GM12878 (cell line): ENCODE measurements at regions of chr13 and their contacts with region 1.

Region 1: GRCh38 chr13:20418953-20419352 is 106.7 kb downstream of the CRYL1 start:
- DNase-seq: no peak
- ATAC-seq: no peak
- H3K4me3 ChIP-seq: no peak overlapping the region
- H3K27ac ChIP-seq: no peak overlapping the region
- H3K4me1 ChIP-seq: peaks cover 14% of the 10 kb centered on the region
- H3K27me3 ChIP-seq: no peaks in the 10 kb centered on the region
- CTCF ChIP-seq: no peak
- EP300 ChIP-seq: no peak
- POLR2A ChIP-seq: no peak
- RAD21 ChIP-seq: no peak

Region 2: DNA sequence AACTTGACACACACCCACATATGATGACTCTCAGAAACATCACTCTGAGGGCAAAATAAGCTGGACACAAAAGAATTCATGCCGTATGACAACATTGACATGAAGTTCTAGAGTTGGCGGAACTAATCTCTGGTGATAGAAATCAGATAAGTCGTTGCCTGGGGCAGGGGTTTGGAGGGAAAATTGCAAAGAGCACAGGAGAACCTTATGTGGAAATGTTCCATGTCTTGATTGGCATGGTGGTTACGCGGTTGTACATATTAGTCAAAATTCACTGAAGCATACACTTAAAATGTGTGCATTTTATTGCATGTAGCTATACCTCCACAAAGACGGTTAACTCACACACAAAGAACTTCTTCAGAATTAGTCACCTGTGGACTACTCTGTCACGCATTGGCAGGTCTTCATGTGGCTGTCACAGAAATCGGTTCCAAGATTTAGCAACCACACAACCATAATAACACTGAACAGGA is 49.0 kb before region 1 on chr13:
- CTCF ChIA-PET with region 1: no interaction called
- POLR2A ChIA-PET with region 1: no interaction called
- RAD21 ChIA-PET with region 1: no interaction called
- SMC1A ChIA-PET with region 1: interaction called, 3 read pairs
- in situ Hi-C with region 1: no loop called
- intact Hi-C with region 1: loop called (anchors 1 kb)
- DNase-seq: peak; percentile 59
- ATAC-seq: peak; percentile 96
- H3K4me3 ChIP-seq: no peak overlapping the region
- H3K27ac ChIP-seq: no peak overlapping the region; the same call in 1 of the 2 replicates
- H3K4me1 ChIP-seq: peaks cover 9% of the 10 kb centered on the region
- H3K27me3 ChIP-seq: no peaks in the 10 kb centered on the region
- CTCF ChIP-seq: no peak
- EP300 ChIP-seq: peak; percentile 45 to 47; a peak in 2 of 4 replicates
- POLR2A ChIP-seq: no peak
- RAD21 ChIP-seq: no peak

Region 3: GRCh38 chr13:20401931-20402856 is 16.8 kb before region 1 on chr13:
- CTCF ChIA-PET with region 1: no interaction called
- POLR2A ChIA-PET with region 1: no interaction called
- RAD21 ChIA-PET with region 1: no interaction called
- SMC1A ChIA-PET with region 1: no interaction called
- in situ Hi-C with region 1: no loop called
- intact Hi-C with region 1: no loop called
- DNase-seq: no peak
- ATAC-seq: no peak
- H3K4me3 ChIP-seq: no peak overlapping the region
- H3K27ac ChIP-seq: no peak overlapping the region
- H3K4me1 ChIP-seq: no peaks in the 10 kb centered on the region
- H3K27me3 ChIP-seq: no peaks in the 10 kb centered on the region
- CTCF ChIP-seq: no peak
- EP300 ChIP-seq: no peak
- POLR2A ChIP-seq: no peak
- RAD21 ChIP-seq: no peak

Region 4: GRCh38 chr13:20461481-20461859 is 42.5 kb after region 1 on chr13:
- CTCF ChIA-PET with region 1: no interaction called
- POLR2A ChIA-PET with region 1: no interaction called
- RAD21 ChIA-PET with region 1: no interaction called
- SMC1A ChIA-PET with region 1: no interaction called
- in situ Hi-C with region 1: no loop called
- intact Hi-C with region 1: no loop called
- DNase-seq: no peak
- ATAC-seq: no peak
- H3K4me3 ChIP-seq: no peak overlapping the region
- H3K27ac ChIP-seq: no peak overlapping the region
- H3K4me1 ChIP-seq: no peaks in the 10 kb centered on the region
- H3K27me3 ChIP-seq: no peaks in the 10 kb centered on the region
- CTCF ChIP-seq: no peak
- EP300 ChIP-seq: no peak
- POLR2A ChIP-seq: no peak
- RAD21 ChIP-seq: no peak